ENCODE measurements at regions of chr19 and their contacts with region 1.

Region 1: DNA sequence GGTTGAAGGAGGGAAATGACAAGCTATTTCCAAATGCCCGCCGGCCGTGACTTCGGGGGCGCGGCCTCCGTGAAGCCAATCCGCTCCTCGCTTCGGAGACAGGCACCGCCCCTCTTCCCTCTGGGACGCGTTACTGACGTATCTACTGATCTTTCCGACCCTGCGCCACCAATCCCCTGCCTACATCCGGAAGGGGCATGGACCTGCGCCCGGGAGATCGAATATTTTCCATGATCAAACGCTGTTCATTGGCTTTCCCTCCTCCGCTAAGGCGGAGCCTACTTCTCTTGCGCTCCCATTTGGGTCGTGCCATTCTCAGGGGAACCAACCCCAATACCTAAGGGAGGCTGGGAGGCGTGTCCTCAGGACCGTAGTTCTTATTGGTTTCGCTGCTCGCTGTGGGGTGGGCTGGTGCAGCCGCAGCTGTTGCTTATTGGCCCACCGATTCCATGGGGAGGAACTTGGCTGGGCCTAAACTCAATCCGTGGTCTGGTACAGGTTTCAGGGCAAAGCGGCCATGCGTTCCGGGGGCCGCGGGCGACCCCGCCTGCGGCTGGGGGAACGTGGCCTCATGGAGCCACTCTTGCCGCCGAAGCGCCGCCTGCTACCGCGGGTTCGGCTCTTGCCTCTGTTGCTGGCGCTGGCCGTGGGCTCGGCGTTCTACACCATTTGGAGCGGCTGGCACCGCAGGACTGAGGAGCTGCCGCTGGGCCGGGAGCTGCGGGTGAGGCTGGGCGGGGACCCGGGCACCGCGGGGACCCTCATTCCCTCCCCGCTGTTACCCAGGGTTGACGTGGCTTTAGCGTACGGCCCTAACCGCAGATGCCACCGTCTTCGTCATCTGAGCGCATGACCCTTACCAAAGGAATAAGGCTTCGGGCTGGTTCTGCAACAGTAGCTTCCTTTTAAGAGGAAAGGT is at the start of gene QPCTL:
- DNase-seq: peak; percentile 99
- H3K4me3 Mint-ChIP-seq: peak within 1 kb of the TSS; percentile 94
- H3K27ac Mint-ChIP-seq: peak within 1 kb of the TSS; percentile 97
- H3K4me1 Mint-ChIP-seq: peaks cover 19% of the 10 kb centered on the region
- H3K27me3 Mint-ChIP-seq: no peaks in the 10 kb centered on the region
- total RNA-seq, gene QPCTL: 16.7 and 20.9 TPM in 2 replicates

Region 2: DNA sequence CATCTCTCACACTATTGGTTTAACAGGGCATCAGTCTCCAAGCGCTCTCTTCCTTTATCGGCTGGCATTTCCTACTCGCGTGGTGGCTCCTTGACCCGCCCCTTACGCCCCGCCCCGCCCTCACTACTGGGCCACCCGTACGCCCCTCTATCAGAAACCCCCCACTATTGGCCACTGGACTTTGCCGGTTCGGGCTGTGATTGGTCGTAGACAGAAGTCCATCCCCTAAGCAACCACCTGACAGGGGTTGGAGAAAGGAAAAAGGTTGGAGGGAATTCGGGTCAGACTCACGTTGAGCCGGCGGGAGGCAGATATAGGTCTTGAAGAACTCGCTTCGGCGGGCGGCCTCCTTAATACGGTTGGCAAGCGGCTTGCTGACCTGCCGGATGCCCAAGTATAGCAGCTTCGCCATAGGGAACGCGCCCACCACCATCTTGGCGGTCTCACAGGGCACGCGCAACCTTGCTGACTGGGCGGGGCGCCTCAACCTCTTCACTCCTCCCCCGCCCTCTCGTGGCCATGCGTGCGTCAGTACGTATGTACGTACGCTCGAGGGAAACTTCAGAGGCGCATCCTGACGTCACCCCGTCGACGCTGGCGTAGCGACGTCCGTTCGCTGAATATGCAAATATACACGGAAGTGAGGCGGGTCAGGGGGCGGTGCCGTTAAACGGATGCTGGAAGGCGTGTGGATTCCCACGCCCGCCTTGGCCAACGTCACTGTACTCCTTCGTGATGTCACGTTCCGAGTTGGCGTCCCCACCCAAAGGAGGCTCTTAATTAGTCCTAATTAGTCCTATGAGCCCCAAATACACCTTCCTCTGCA is 107.9 kb before region 1 on chr19 and contains the start of gene OPA3:
- intact Hi-C with region 1: loop called (anchors 1 kb)
- DNase-seq: peak; percentile 100
- H3K4me3 Mint-ChIP-seq: peak within 1 kb of the TSS; percentile 98
- H3K27ac Mint-ChIP-seq: peak within 1 kb of the TSS; percentile 99
- H3K4me1 Mint-ChIP-seq: peaks cover 13% of the 10 kb centered on the region
- H3K27me3 Mint-ChIP-seq: peaks cover 1% of the 10 kb centered on the region
- total RNA-seq, gene OPA3: 14.0 and 15.3 TPM in 2 replicates

Region 3: DNA sequence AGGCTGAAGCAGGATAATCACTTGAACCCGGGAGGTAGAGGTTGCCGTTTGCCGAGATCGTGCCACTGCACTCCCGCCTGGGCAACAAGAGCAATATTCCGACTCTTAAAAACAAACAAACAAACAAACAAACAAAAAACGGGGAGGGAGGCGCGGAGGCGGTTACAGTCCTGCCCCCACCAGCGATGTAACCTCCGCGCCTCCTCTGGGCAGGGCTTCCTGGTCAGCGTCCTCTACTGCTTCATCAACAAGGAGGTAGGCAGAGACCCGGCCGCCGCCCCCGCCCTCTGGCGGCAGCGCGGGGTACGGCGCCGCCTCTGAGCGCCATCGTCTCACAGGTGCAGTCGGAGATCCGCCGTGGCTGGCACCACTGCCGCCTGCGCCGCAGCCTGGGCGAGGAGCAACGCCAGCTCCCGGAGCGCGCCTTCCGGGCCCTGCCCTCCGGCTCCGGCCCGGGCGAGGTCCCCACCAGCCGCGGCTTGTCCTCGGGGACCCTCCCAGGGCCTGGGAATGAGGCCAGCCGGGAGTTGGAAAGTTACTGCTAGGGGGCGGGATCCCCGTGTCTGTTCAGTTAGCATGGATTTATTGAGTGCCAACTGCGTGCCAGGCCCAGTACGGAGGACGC is 10.9 kb before region 1 on chr19:
- intact Hi-C with region 1: loop called (anchors 1 kb)
- DNase-seq: peak; percentile 97
- H3K4me3 Mint-ChIP-seq: peak overlapping the region; percentile 72
- H3K27ac Mint-ChIP-seq: peak overlapping the region; percentile 39
- H3K4me1 Mint-ChIP-seq: peaks cover 16% of the 10 kb centered on the region
- H3K27me3 Mint-ChIP-seq: peaks cover 2% of the 10 kb centered on the region

Region 4: DNA sequence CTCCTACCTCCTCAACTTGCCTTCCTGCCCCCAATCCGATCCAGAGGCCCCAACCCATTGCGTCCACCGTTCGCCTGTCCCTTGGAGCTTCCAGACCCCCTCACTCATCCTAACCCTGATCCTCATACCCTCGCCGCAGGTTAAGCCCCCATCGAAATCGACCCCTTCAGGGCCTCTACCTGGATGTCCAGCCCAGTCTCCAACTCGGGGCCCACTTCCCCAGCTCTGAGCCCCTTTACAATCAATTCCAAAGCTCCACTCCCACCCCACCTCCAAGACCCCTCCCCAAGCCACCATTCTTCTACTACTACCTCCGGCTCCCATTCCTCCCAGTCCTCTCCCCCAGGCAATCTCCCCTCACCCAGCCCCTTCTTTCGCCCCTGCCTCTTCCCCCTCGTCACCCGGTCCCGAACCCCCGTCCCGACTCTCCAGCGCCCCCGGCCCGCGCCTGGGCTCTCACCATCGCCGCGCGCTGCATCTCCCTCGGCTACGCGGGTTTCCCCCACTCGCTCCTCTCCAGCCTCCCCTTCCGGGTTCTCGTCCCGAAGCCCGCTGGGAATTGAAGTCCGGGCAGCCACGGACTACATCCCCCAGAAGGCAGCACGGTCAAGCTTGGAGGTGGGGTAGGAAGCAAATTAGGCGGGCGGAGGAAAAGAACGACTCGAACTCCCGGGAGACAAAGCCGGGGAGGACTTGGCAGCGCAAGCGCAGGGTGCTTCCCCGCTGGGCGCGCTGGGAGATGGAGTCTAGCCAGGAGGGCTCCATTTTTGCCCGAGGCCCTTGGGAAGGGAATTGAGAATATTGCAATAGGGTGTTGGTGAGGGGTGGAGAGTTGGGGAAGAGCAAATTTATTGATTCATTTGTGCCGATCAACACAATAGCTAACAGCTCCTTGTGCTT is 38.2 kb after region 1 on chr19 and contains the start of gene FBXO46:
- intact Hi-C with region 1: loop called (anchors 1 kb)
- DNase-seq: peak; percentile 99
- H3K4me3 Mint-ChIP-seq: peak within 1 kb of the TSS; percentile 95
- H3K27ac Mint-ChIP-seq: peak within 1 kb of the TSS; percentile 88
- H3K4me1 Mint-ChIP-seq: peaks cover 25% of the 10 kb centered on the region
- H3K27me3 Mint-ChIP-seq: no peaks in the 10 kb centered on the region
- total RNA-seq, gene FBXO46: 34.2 and 34.7 TPM in 2 replicates

Region 5: DNA sequence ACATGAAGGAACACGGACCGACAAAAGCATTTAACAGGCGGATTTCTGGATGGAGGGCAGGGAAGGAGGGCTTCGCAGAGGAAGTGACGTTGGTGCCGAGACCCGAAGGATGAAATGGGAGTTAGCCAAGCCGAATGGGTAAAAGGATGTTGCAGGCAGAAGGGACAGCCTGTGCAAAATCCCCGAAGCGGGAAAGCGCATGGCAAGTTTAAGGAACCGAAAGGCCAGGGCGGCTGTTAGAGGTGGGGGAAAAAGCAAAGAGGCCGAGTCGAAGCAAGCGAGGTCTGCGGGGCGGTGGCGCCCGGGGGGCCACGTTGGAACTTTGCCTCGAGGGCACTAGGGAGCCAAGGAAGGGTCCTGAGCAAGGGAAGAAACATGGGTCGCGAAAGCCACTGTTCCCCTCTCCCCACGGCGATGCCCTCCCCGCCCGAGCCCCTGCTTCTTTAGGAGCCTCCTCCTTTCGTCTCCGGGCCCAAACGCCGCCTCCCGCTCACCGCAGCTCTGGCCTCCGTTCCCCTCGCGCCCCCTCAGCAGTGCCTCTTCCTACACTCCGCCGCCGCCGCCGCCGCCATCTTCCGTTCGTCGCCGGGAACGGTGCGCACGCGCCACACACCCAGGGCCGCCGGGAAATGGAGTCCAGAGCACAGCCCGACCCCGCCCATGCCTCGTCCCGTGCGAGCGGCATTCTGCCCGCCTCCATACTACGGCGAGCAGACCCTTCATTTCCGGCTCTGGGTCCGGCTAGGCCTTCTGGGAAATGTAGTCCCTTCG is 170.3 kb after region 1 on chr19 and contains the start of gene SYMPK:
- intact Hi-C with region 1: loop called (anchors 1 kb)
- DNase-seq: peak; percentile 100
- H3K4me3 Mint-ChIP-seq: peak within 1 kb of the TSS; percentile 90
- H3K27ac Mint-ChIP-seq: peak within 1 kb of the TSS; percentile 97
- H3K4me1 Mint-ChIP-seq: peaks cover 24% of the 10 kb centered on the region
- H3K27me3 Mint-ChIP-seq: peaks cover 36% of the 10 kb centered on the region
- total RNA-seq, gene SYMPK: 124 and 131 TPM in 2 replicates

Measured in activated CD4-positive, alpha-beta T cell treated with anti-CD3 and anti-CD28 coated beads, Interleukin-2, amount 10 ng/mL, durations not matched to agents 24 days and 14 days (primary cell).